Left ventricle myocardium superior (tissue), 1 donor: ENCODE measurements at regions of chr4 and their contacts with region 1.

Region 1: DNA sequence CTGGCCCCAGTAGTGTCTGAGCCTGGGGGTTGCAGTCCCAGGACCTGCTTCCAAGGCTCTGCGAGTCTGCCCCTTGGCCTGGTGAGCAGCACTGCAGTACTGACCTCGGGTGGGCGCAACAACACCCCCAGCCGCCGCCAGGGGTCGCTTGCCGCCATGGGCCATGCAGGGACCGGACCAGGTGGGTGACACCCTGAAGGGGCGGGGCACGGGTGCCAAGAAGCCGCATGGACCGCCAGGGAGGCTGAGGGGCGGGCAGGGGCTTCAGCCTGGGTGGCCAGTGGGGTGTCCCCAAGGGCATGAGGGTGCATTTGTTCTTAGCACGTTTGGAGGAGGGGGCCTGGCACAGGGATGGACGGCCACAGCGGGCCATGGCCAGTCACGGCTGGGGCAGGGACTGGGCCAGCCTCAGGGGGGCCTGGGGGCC is 25.0 kb downstream of the TACC3 start:
- DNase-seq: peak; percentile 84
- ATAC-seq: peak; percentile 75

Region 2: DNA sequence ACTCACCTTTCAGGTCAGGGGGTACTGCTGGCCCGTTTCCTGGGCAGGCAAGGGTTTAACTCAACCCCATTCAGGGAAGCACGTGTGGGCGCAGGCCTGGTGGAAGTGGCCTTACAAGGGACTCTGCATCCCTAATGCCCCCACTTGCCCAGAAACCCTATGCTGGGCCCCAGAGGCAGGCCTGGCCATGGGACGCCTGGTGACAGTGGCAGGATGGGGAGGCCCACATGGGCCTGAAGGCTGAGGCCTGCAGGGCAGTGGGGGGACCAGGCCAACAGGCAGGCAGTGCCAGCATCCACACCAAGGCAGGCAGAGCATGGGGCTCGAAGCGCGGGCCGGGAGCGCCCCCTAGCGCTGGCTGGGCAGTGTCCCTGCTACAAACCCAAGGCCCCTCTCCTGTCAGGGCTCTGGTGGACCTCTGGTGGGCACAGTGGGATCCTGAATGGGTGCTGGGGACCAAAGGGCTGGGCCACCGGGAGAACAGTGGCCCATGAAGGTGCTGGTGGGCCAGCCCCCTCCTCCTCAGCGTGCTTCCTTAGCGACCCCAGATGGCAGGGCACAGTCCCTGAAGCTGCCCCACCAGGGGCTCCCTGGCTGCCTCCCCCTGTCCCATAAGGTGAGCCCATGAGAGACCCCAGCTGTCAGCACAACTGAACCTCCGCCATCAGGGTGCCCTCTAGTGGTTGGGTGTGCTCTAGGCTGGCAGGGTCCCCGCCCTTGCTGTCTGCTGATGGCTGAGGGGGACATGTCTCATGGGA is 63.7 kb after region 1 on chr4:
- intact Hi-C with region 1: loop called (anchors 10 kb)
- DNase-seq: peak; percentile 79
- ATAC-seq: peak; percentile 79

Region 3: DNA sequence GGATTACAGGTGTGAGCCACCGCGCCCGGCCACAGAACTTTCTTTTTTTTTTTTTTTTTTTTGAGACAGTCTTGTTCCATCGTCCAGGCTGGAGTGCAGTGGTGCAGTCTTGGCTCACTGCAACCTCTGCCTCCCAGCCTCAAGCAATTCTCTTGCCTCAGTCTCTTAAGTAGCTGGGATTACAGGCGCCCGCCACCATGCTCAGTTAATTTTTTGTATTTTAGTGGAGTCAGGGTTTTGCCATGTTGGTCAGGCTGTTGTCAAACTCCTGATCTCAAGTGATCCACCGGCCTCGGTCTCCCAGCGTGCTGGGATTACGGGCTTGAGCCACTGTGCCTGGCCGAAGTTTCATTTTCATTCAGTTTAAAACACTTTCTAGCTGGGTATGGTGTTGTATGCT is 806.5 kb after region 1 on chr4:
- intact Hi-C with region 1: no loop called
- DNase-seq: no peak
- ATAC-seq: no peak